Body of pancreas (tissue), 4 donors: ENCODE measurements at regions of chr3 and their contacts with region 1.

Region 1: GRCh38 chr3:63993653-63994079 is 29.6 kb downstream of the PSMD6 start:
- DNase-seq: peak; percentile 76 to 84 (median 82)
- ATAC-seq: peak; percentile 93
- H3K4me3 ChIP-seq: no peak overlapping the region
- H3K27ac ChIP-seq: peak overlapping the region in 3 of 4 donors; percentile 23 to 32 (median 31)
- H3K4me1 ChIP-seq: peaks cover 33% of the 10 kb centered on the region
- H3K27me3 ChIP-seq: no peaks in the 10 kb centered on the region
- CTCF ChIP-seq: peak; percentile 87 to 96 (median 94)
- POLR2A ChIP-seq: no peak

Region 2: GRCh38 chr3:63911873-63912767 is 81.5 kb before region 1 on chr3 and contains the start of gene SCAANT1:
- intact Hi-C with region 1: loop called (anchors 10 kb)
- DNase-seq: peak; percentile 91 to 94 (median 92)
- ATAC-seq: peak; percentile 83
- H3K4me3 ChIP-seq: peak within 1 kb of the TSS; percentile 42 to 47
- H3K27ac ChIP-seq: peak within 1 kb of the TSS; percentile 96 to 99 (median 98)
- H3K4me1 ChIP-seq: peaks cover 50% of the 10 kb centered on the region
- H3K27me3 ChIP-seq: no peaks in the 10 kb centered on the region
- CTCF ChIP-seq: peak in 4 of 7 experiments; percentile 21 to 42 (median 37)
- POLR2A ChIP-seq: peak; percentile 80 to 85 (median 84)
- total RNA-seq, gene SCAANT1: not detected